ENCODE measurements at regions of chr6 and their contacts with region 1.

Region 1: GRCh38 chr6:44431118-44431725 is 43.7 kb downstream of the CDC5L start:
- DNase-seq: no peak
- H3K4me3 ChIP-seq: no peak overlapping the region
- CTCF ChIP-seq: peak; percentile 51

Region 2: DNA sequence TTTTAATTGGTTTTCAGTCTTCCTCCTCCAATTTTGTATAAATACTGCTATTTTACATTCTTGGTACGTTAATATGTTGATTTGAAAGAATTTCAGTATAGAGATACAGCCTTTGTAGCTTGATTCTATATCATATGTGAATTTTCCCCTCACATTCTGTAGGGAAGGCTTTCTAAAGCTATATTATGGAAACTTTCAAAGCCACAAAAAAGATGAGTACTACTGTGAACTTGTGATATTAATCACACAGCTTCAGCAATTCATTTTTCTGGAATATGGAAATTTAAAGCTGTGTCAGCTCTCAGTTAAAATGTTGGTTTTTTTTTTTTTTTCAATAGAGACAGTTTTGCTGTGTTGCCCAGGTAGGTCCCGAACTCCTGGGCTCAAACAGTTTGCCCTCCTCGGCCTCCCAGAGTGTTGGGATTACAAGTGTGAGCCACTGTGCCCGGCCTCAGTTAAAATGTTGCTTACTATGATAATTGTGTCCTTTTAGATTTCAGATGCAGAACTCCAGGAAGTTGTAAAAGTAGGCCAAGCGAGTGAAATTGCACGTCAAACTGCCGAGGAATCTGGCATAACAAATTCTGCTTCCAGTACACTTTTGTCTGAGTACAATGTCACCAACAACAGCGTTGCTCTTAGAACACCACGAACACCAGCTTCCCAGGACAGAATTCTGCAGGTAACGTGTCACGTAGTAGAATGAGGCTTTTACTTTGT is 23.1 kb before region 1 on chr6:
- CTCF ChIA-PET with region 1: interaction called, 11 read pairs
- POLR2A ChIA-PET with region 1: no interaction called
- DNase-seq: no peak
- H3K4me3 ChIP-seq: no peak overlapping the region
- CTCF ChIP-seq: no peak

Region 3: GRCh38 chr6:44446628-44447306 is 15.5 kb after region 1 on chr6:
- CTCF ChIA-PET with region 1: interaction called, 367 read pairs
- POLR2A ChIA-PET with region 1: no interaction called
- DNase-seq: peak; percentile 69
- H3K4me3 ChIP-seq: no peak overlapping the region
- CTCF ChIP-seq: no peak

Region 4: DNA sequence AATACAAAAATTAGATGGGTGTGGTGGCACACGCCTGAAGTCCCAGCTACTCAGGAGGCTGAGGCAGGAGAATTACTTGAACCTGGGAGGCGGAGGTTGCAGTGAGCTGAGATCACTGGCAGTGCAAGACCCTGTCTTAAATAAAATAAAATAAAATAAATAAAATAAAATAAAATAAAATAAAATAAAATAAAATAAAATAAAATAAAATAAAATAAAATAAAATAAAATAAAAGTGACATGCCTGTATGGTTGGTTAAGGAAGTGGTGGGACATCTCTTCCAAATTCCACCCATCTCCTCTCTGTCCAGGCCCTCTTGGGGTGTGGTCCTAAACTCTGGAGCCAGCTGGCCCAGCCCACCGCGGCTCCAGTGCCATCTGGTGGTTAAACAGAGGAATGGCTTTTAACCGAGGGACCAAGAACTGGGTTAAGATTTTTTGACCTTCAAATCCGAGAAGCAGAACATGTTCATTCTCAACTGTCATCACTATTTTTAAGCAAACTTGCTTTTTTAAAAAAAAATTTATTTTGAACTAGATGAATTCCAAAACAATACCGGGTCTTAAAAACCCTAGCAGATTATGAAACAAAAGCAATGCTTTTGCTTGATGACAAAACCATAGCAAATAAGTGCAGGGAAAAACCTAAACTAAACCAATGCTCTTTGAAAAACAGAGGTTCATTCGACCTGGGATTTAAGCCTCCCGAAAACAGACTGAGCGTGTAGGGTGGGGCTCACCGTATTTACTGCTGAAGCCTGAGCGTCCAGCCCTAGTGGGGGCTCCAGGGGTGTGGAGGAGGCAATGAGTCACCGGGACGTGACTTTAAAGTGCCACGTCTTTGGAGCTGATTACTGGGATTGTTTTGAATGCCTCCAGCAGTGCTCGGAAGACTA is 25.1 kb after region 1 on chr6:
- CTCF ChIA-PET with region 1: interaction called, 367 read pairs
- POLR2A ChIA-PET with region 1: interaction called, 3 read pairs
- DNase-seq: no peak
- H3K4me3 ChIP-seq: no peak overlapping the region
- CTCF ChIP-seq: peak; percentile 79

Region 5: DNA sequence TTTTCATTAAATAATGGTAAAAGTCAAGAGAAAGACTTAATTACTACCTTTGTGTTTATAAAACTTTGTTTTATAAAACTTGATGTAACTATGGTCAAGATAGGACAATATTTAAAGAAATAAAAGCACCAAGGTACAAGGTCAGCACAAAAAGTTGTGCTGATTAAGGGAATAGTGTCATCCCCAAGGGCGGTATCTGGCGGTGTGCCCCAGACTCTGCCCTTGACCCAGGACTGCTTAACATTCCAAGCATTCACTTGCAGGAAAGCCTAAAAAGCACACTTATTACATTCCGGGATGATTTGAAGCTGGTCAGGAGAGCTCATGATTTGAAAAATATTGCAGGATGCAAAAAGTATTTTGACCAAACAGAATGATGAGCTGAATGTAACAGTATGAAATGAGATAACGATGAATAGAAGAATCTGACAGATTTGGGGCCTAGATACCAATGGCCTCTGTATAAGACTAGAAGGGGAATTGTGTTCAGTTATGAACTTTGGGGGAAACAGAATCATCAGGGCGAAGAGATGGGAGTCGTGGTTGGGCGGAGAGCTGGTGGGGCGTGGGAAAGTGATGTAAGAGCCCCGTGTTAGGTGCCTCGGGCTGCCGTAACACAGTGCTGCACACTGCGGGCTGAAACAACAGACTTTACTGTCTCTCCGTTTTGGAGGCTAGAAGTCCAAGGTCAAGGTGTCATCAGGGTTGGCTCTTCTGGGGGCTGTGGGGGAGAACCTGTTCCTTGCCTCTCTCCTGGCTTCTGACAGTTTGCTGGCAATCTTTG is 33.5 kb after region 1 on chr6:
- CTCF ChIA-PET with region 1: interaction called, 367 read pairs
- POLR2A ChIA-PET with region 1: no interaction called
- DNase-seq: no peak
- H3K4me3 ChIP-seq: no peak overlapping the region
- CTCF ChIP-seq: no peak